Natural killer cell (primary cell): ENCODE measurements at regions of chr5 and their contacts with region 1.

Region 1: GRCh38 chr5:89396278-89396954 is 513.4 kb upstream of the MEF2C start:
- DNase-seq: peak in 1 of 2 donors; percentile 2
- ATAC-seq: peak; percentile 44 to 64 (median 62)
- H3K4me3 ChIP-seq: no peak overlapping the region
- H3K4me3 Mint-ChIP-seq: peak overlapping the region; percentile 7
- H3K27ac ChIP-seq: peak overlapping the region; percentile 44
- H3K27ac Mint-ChIP-seq: peak overlapping the region; percentile 33 to 71
- H3K4me1 ChIP-seq: no peaks in the 10 kb centered on the region
- H3K4me1 Mint-ChIP-seq: peaks cover 23 to 26% of the 10 kb centered on the region in 2 donors
- H3K27me3 ChIP-seq: no peaks in the 10 kb centered on the region
- H3K27me3 Mint-ChIP-seq: no peaks in the 10 kb centered on the region
- CTCF ChIP-seq: no peak

Region 2: GRCh38 chr5:89313804-89314588 is 82.4 kb before region 1 on chr5:
- intact Hi-C with region 1: loop called (anchors 5 kb)
- DNase-seq: peak; percentile 6 to 32
- ATAC-seq: peak; percentile 84 to 92 (median 90)
- H3K4me3 ChIP-seq: no peak overlapping the region
- H3K4me3 Mint-ChIP-seq: no peak overlapping the region
- H3K27ac ChIP-seq: peak overlapping the region; percentile 63
- H3K27ac Mint-ChIP-seq: peak overlapping the region; percentile 70 to 74
- H3K4me1 ChIP-seq: peaks cover 9% of the 10 kb centered on the region
- H3K4me1 Mint-ChIP-seq: peaks cover 21 to 30% of the 10 kb centered on the region in 2 donors
- H3K27me3 ChIP-seq: no peaks in the 10 kb centered on the region
- H3K27me3 Mint-ChIP-seq: no peaks in the 10 kb centered on the region
- CTCF ChIP-seq: no peak

Region 3: GRCh38 chr5:89686081-89686765 is 289.8 kb after region 1 on chr5:
- intact Hi-C with region 1: no loop called
- DNase-seq: no peak
- ATAC-seq: no peak
- H3K4me3 ChIP-seq: no peak overlapping the region
- H3K4me3 Mint-ChIP-seq: no peak overlapping the region
- H3K27ac ChIP-seq: no peak overlapping the region
- H3K27ac Mint-ChIP-seq: no peak overlapping the region
- H3K4me1 ChIP-seq: no peaks in the 10 kb centered on the region
- H3K4me1 Mint-ChIP-seq: no peaks in the 10 kb centered on the region
- H3K27me3 ChIP-seq: no peaks in the 10 kb centered on the region
- H3K27me3 Mint-ChIP-seq: no peaks in the 10 kb centered on the region
- CTCF ChIP-seq: no peak